ENCODE measurements at regions of chr11 and their contacts with region 1.

Region 1: GRCh38 chr11:79461144-79461543 is 20.3 kb upstream of the TENM4 start:
- DNase-seq: peak in 1 of 2 experiments; percentile 50
- H3K4me3 ChIP-seq: no peak overlapping the region
- H3K4me3 Mint-ChIP-seq: no peak overlapping the region
- H3K27ac Mint-ChIP-seq: no peak overlapping the region
- H3K4me1 ChIP-seq: no peaks in the 10 kb centered on the region
- H3K4me1 Mint-ChIP-seq: no peaks in the 10 kb centered on the region
- H3K27me3 ChIP-seq: no peaks in the 10 kb centered on the region
- H3K27me3 Mint-ChIP-seq: peaks cover 22% of the 10 kb centered on the region
- CTCF ChIP-seq: peak; percentile 68 to 86

Region 2: GRCh38 chr11:79331203-79331901 is 129.8 kb before region 1 on chr11:
- CTCF ChIA-PET with region 1: no interaction called
- POLR2A ChIA-PET with region 1: no interaction called
- intact Hi-C with region 1: no loop called
- DNase-seq: no peak
- H3K4me3 ChIP-seq: no peak overlapping the region
- H3K4me3 Mint-ChIP-seq: no peak overlapping the region
- H3K27ac Mint-ChIP-seq: no peak overlapping the region
- H3K4me1 ChIP-seq: no peaks in the 10 kb centered on the region
- H3K4me1 Mint-ChIP-seq: no peaks in the 10 kb centered on the region
- H3K27me3 ChIP-seq: peaks cover 1% of the 10 kb centered on the region; the same call in 1 of the 2 replicates
- H3K27me3 Mint-ChIP-seq: peaks cover 35% of the 10 kb centered on the region
- CTCF ChIP-seq: no peak

Region 3: GRCh38 chr11:79437278-79437980 is 23.7 kb before region 1 on chr11:
- CTCF ChIA-PET with region 1: no interaction called
- POLR2A ChIA-PET with region 1: no interaction called
- intact Hi-C with region 1: no loop called
- DNase-seq: no peak
- H3K4me3 ChIP-seq: no peak overlapping the region
- H3K4me3 Mint-ChIP-seq: no peak overlapping the region
- H3K27ac Mint-ChIP-seq: no peak overlapping the region
- H3K4me1 ChIP-seq: no peaks in the 10 kb centered on the region
- H3K4me1 Mint-ChIP-seq: no peaks in the 10 kb centered on the region
- H3K27me3 ChIP-seq: no peaks in the 10 kb centered on the region
- H3K27me3 Mint-ChIP-seq: peaks cover 14% of the 10 kb centered on the region
- CTCF ChIP-seq: no peak

Region 4: GRCh38 chr11:79493555-79494171 is 32.5 kb after region 1 on chr11:
- CTCF ChIA-PET with region 1: no interaction called
- POLR2A ChIA-PET with region 1: no interaction called
- intact Hi-C with region 1: loop called (anchors 1 kb)
- DNase-seq: peak; percentile 89 to 93
- H3K4me3 ChIP-seq: no peak overlapping the region
- H3K4me3 Mint-ChIP-seq: no peak overlapping the region
- H3K27ac Mint-ChIP-seq: no peak overlapping the region
- H3K4me1 ChIP-seq: no peaks in the 10 kb centered on the region
- H3K4me1 Mint-ChIP-seq: peaks cover 6% of the 10 kb centered on the region
- H3K27me3 ChIP-seq: no peaks in the 10 kb centered on the region
- H3K27me3 Mint-ChIP-seq: peaks cover 5% of the 10 kb centered on the region
- CTCF ChIP-seq: peak; percentile 96 to 98

Region 5: GRCh38 chr11:79610678-79611077 is 149.5 kb after region 1 on chr11:
- CTCF ChIA-PET with region 1: no interaction called
- POLR2A ChIA-PET with region 1: no interaction called
- intact Hi-C with region 1: loop called (anchors 1 kb)
- DNase-seq: peak in 1 of 2 experiments; percentile 10
- H3K4me3 ChIP-seq: no peak overlapping the region
- H3K4me3 Mint-ChIP-seq: no peak overlapping the region
- H3K27ac Mint-ChIP-seq: no peak overlapping the region
- H3K4me1 ChIP-seq: peaks cover 1% of the 10 kb centered on the region; the same call in 1 of the 2 replicates
- H3K4me1 Mint-ChIP-seq: no peaks in the 10 kb centered on the region
- H3K27me3 ChIP-seq: no peaks in the 10 kb centered on the region
- H3K27me3 Mint-ChIP-seq: peaks cover 3% of the 10 kb centered on the region
- CTCF ChIP-seq: peak; percentile 29 to 33

Region 6: GRCh38 chr11:80155412-80156017 is 694.4 kb after region 1 on chr11:
- CTCF ChIA-PET with region 1: no interaction called
- POLR2A ChIA-PET with region 1: no interaction called
- intact Hi-C with region 1: loop called (anchors 2 kb)
- DNase-seq: peak in 1 of 2 experiments; percentile 63
- H3K4me3 ChIP-seq: no peak overlapping the region
- H3K4me3 Mint-ChIP-seq: no peak overlapping the region
- H3K27ac Mint-ChIP-seq: no peak overlapping the region
- H3K4me1 ChIP-seq: no peaks in the 10 kb centered on the region
- H3K4me1 Mint-ChIP-seq: no peaks in the 10 kb centered on the region
- H3K27me3 ChIP-seq: no peaks in the 10 kb centered on the region
- H3K27me3 Mint-ChIP-seq: peaks cover 5% of the 10 kb centered on the region
- CTCF ChIP-seq: peak; percentile 61 to 73

Measured in Caco-2 (cell line).